Activated naive CD4-positive, alpha-beta T cell treated with anti-CD3 and anti-CD28 coated beads for 36 hours (primary cell): ENCODE measurements at regions of chrX and their contacts with region 1.

Region 1: GRCh38 chrX:12946838-12947544 is 27.9 kb upstream of the TMSB4X start:
- DNase-seq: peak; percentile 85
- H3K4me3 Mint-ChIP-seq: peak overlapping the region; percentile 41
- H3K27ac Mint-ChIP-seq: peak overlapping the region; percentile 98
- H3K4me1 Mint-ChIP-seq: peaks cover 55% of the 10 kb centered on the region
- H3K27me3 Mint-ChIP-seq: no peaks in the 10 kb centered on the region

Region 2: DNA sequence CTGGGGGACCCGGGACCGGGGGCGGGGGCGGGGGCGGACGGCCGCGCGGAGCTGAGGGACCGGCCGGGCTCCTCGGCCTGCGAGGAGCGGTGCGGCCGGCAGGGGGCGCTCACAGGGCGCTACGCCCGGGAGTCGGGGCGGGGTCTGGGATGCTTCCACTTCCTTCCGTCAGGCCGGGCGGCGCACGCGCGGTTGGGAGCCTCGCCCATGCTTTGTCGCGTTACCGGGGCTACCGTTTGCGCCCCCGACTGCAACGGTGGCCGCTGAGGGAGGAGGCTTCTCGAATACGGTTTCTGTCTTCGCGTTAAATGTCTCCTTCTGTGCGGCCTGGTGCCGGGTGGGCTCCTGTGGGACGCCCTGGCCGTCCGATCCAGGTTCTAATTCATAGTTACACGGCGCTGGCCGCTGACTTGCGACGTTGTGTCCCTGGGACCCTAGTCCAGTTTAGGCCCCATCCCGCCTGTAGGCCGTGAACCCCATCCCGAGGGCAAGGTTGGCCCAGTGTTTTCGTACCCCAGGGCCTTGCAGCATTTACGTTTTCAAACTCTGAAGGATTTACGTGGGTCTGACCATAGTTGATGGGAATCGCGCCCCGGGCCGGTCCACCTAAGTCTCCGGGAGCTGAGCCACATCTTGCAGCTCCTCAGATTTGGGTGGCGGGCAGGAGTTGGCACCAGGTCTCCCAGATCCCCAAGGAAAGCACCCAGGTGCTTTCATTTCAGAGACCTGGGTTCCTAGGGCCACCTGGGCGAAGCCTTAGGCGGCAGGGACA is 1188.4 kb before region 1 on chrX:
- CTCF ChIA-PET with region 1: no interaction called
- intact Hi-C with region 1: loop called (anchors 5 kb)
- DNase-seq: peak; percentile 89
- H3K4me3 Mint-ChIP-seq: peak overlapping the region; percentile 94
- H3K27ac Mint-ChIP-seq: peak overlapping the region; percentile 100
- H3K4me1 Mint-ChIP-seq: peaks cover 20% of the 10 kb centered on the region
- H3K27me3 Mint-ChIP-seq: no peaks in the 10 kb centered on the region

Region 3: DNA sequence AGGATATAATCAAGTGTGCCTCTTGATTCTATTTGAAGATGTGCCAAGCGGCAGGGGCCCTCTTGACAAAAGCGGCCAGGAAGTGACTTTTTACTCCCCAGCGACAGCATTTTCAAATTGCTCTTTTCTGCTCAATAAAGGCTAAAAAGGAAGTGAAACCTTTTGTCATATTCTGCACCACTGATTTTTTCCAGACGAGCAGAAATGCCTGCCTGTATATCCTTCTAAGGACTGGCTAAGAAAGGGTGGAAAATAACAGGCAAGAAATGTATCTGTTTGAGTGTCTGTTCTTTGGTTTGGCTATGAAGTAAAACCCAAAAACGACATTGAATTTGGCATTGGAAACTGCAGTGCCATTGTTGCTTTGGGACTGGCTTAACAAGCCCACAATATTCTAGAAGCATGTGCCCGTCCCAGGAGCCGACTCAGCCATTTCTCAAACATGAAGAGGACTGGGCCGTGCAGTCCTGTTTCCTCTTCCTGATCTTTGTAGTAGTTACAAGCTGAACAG is 53.4 kb after region 1 on chrX:
- CTCF ChIA-PET with region 1: interaction called, 5 read pairs
- intact Hi-C with region 1: loop called (anchors 1 kb)
- DNase-seq: peak; percentile 69
- H3K4me3 Mint-ChIP-seq: peak overlapping the region; percentile 65
- H3K27ac Mint-ChIP-seq: peak overlapping the region; percentile 92
- H3K4me1 Mint-ChIP-seq: peaks cover 67% of the 10 kb centered on the region
- H3K27me3 Mint-ChIP-seq: no peaks in the 10 kb centered on the region

Region 4: GRCh38 chrX:13087322-13088155 is 140.5 kb after region 1 on chrX:
- CTCF ChIA-PET with region 1: interaction called, 36 read pairs
- intact Hi-C with region 1: loop called (anchors 1 kb)
- DNase-seq: peak; percentile 74
- H3K4me3 Mint-ChIP-seq: peak overlapping the region; percentile 79
- H3K27ac Mint-ChIP-seq: peak overlapping the region; percentile 97
- H3K4me1 Mint-ChIP-seq: peaks cover 87% of the 10 kb centered on the region
- H3K27me3 Mint-ChIP-seq: no peaks in the 10 kb centered on the region

Region 5: DNA sequence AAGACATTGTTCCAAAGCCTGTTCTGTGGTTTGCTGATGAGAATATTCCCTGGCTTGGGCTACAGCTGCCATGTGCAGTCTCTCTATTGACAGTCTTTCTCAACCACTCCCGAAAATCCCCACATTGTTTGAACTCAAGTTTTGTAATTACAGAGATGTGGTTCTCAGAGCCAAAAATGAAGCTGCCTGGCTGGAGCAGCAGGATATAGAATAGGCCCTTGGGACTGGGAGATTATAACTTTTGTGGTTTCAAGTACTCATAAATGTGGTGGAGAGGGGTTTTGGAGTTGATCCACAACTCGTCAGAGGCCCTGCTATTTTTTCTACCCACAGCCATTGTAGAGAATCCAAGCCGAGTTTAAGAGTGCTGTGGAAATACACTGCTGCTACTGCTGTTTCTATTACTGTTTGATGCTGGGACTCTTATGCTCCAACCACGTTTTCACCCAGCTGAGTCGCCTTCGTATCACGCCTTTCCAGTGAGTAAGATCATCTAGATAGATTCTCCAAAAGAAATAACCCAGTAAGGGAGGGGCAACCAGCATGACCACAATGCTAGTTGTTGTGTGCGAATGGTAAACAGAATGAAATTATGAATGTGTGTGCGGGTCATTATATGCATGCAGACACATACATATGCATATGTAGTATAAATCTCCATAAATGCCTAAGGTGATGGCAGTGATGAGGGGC is 430.0 kb after region 1 on chrX:
- CTCF ChIA-PET with region 1: no interaction called
- intact Hi-C with region 1: loop called (anchors 2 kb)
- DNase-seq: peak; percentile 24
- H3K4me3 Mint-ChIP-seq: no peak overlapping the region
- H3K27ac Mint-ChIP-seq: no peak overlapping the region
- H3K4me1 Mint-ChIP-seq: peaks cover 25% of the 10 kb centered on the region
- H3K27me3 Mint-ChIP-seq: no peaks in the 10 kb centered on the region

Region 6: DNA sequence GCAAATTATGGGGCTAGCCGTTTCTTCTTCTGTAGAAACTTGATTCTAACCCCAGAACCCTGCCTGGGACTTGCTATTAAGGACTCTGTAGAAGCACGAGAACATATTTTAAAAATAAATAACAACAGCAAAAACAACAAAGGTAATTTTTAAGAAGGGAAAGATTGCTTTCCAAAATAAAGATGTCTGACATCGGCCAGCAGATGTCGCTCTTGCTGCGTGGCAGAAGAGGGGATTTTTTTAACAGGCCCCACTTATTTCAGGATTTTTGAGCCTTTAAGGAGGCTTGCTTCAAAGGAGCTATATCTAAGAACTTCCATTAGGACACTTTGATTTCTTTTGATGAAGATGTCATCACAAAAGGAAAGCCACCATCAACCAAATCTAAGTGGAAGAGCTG is 559.6 kb after region 1 on chrX:
- CTCF ChIA-PET with region 1: interaction called, 3 read pairs
- intact Hi-C with region 1: loop called (anchors 1 kb)
- DNase-seq: peak; percentile 61
- H3K4me3 Mint-ChIP-seq: no peak overlapping the region
- H3K27ac Mint-ChIP-seq: no peak overlapping the region
- H3K4me1 Mint-ChIP-seq: peaks cover 7% of the 10 kb centered on the region
- H3K27me3 Mint-ChIP-seq: no peaks in the 10 kb centered on the region

Region 7: DNA sequence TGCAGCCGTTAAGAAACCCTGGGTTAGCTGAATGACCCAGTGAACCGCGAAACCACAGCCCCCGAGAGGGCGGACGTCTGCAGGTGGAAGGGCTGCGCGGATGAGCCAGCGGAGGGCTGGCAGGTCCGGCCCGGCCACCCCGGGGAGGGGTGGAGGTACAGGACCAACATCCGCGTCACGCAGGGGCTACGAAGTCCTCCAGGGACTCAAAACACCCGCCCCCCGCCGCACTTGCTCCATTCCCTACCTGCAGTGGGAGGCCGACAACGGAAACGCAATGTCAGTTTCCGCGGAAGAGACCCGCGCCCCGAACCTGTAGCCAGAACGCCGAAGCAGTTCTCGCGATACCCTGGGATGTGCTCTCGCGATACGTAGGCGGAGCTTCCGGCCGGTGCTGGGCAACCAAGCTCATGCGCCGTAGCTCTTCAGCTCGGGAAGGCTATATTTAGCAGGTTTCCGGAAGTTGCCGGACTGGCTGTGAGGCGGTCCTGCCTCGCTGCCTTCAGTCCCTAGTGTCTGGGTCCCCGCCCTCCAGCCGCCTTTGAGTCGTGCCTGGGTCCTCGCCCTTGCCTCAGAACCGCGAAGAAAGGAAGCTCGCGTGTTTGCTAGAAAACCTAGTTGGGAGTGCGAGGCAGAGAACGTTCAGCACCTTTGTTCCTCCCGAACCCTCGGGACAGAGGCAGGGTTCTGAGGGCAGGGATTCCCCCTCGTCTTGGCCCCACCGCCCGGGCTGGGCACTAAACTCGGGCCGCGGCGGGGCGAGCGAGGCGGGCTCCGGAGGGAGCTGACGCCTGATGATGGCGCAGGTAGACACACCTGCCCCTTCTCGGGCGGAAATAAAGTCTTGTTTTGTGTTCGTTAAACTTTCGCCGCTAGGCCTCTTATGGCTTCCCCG is 787.5 kb after region 1 on chrX and contains the starts of genes OFD1 and TRAPPC2:
- CTCF ChIA-PET with region 1: no interaction called
- intact Hi-C with region 1: loop called (anchors 2 kb)
- DNase-seq: peak; percentile 92
- H3K4me3 Mint-ChIP-seq: peak within 1 kb of the TSS; percentile 95
- H3K27ac Mint-ChIP-seq: peak within 1 kb of the TSS; percentile 92
- H3K4me1 Mint-ChIP-seq: peaks cover 43% of the 10 kb centered on the region
- H3K27me3 Mint-ChIP-seq: no peaks in the 10 kb centered on the region
- total RNA-seq, gene OFD1: 25.3 to 26.2 TPM
- total RNA-seq, gene TRAPPC2: 9.6 to 10.7 TPM